Esophagus muscularis mucosa (tissue), 4 donors: ENCODE measurements at regions of chr19 and their contacts with region 1.

Region 1: DNA sequence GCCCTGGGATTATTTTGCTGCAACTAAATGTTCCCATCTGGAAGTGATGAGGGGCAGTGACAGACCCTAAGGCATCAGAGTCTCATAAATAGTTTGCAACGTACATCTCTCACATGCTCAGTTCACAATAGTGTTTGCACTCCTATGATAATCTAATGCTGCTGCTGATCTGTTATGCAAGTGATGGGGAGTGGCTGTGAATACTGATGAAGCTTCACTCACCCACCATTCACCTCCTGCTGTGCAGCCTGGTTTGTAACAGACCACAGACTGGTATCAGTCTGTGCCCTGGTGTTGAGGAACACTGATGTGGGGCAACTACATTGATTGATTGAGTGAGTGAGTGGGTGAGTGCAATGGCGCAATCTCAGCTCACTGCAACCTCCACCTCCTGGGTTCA is 54.9 kb downstream of the ZNF726 start:
- DNase-seq: peak; percentile 14
- H3K4me3 ChIP-seq: no peak overlapping the region
- H3K27ac ChIP-seq: no peak overlapping the region
- H3K4me1 ChIP-seq: peaks cover 0 to 14% (median 6%) of the 10 kb centered on the region in 4 donors
- H3K27me3 ChIP-seq: peaks cover 0 to 47% (median 14%) of the 10 kb centered on the region in 4 donors
- CTCF ChIP-seq: no peak
- EP300 ChIP-seq: no peak
- POLR2A ChIP-seq: no peak

Region 2: DNA sequence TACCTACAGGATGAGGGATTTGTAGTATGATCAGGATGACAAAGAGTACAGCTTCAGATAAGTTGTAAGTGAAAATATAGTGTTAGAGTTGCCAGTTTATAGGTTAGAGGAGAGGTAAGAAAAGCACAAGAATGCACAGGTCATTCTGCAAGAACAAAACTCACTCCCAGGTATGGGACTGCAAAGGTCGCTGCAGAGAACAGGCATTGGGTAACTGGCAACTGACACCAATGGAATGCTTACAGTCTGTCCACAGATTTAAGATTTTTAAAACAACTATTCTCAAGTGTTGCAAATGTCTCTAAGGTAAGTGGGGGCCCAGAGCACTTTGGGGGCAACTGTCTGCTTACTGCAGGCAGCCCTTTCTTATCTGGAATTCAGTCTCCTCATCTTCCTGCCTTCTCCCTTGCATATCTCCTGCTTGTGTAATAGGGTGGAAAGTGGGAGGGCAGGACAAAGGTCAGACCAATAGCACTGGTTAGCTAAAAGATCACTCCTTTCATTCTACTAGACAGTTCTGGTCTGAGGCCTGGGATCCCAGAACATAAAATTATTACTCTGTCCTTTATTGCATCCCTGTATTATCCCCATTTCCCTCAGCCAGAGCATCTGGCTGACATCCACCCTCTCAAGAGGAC is 97.2 kb before region 1 on chr19:
- intact Hi-C with region 1: loop called (anchors 5 kb)
- DNase-seq: no peak
- H3K4me3 ChIP-seq: no peak overlapping the region
- H3K27ac ChIP-seq: no peak overlapping the region
- H3K4me1 ChIP-seq: no peaks in the 10 kb centered on the region
- H3K27me3 ChIP-seq: peaks cover 0 to 6% (median 0%) of the 10 kb centered on the region in 4 donors
- CTCF ChIP-seq: no peak
- EP300 ChIP-seq: no peak
- POLR2A ChIP-seq: no peak

Region 3: GRCh38 chr19:23896912-23897311 is 72.7 kb before region 1 on chr19:
- intact Hi-C with region 1: no loop called
- DNase-seq: no peak
- H3K4me3 ChIP-seq: no peak overlapping the region
- H3K27ac ChIP-seq: no peak overlapping the region
- H3K4me1 ChIP-seq: no peaks in the 10 kb centered on the region
- H3K27me3 ChIP-seq: no peaks in the 10 kb centered on the region
- CTCF ChIP-seq: no peak
- EP300 ChIP-seq: no peak
- POLR2A ChIP-seq: no peak